ENCODE measurements at regions of chr2 and their contacts with region 1.

Region 1: DNA sequence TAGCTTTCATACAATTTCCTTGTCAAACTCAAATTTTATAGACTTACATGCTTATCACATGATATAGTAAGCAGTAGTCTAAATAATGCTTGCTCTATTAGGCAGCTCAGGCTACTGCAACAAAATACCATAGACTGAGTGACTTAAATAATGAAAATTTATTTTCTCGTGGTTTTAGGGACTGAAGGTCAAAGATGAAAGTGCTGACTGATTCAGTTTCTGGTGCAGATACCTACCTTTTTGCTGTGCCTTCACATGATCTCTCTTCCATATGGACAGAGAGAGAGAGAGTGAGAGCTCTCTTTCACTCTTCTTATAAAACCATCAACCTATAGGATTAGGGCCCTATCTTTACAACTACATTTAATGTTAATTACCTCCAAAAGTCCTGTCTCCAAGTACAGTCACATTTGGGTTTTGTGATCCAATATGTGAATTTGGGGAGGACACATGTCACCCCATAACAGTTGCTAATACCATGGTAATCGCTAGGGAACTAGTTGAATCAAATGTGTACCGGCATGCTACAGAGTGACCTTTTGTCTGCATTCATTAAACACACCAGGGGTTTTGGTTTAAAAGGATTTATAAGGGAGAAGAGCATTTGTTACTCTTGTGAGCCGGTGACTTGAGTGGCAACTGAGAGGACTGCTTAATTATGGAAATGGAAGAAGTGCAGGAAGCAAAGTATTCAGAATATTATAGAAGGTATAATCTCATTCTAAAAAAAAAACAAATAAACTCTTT is 723.4 kb upstream of the LRRTM4 start:
- DNase-seq: peak; percentile 13
- ATAC-seq: no peak
- H3K4me3 ChIP-seq: no peak overlapping the region
- H3K27ac ChIP-seq: peak overlapping the region; percentile 2
- H3K4me1 ChIP-seq: peaks cover 11% of the 10 kb centered on the region
- H3K27me3 ChIP-seq: no peaks in the 10 kb centered on the region
- CTCF ChIP-seq: no peak
- EP300 ChIP-seq: no peak
- POLR2A ChIP-seq: no peak
- RAD21 ChIP-seq: no peak

Region 2: DNA sequence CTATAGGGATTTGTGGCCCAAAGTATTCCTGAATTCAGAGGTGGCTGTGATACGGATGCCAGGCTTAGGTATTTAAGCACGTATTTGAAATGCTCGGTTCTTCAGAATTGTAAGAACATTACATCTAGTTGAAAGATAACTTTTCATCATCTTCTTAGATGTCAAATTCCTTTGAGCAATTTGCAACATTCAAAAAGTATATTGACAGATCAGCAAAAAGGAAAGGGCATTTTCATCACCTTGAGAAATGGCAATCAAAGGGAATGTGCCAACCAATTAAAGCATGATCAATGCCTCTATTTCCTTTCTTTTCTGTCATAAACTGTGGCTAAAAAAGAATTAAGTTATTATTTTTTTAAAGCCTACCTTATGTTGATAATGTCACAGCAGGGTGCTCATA is 657.1 kb before region 1 on chr2:
- CTCF ChIA-PET with region 1: no interaction called
- POLR2A ChIA-PET with region 1: no interaction called
- in situ Hi-C with region 1: no loop called
- intact Hi-C with region 1: loop called (anchors 5 kb)
- DNase-seq: no peak
- ATAC-seq: no peak
- H3K4me3 ChIP-seq: no peak overlapping the region
- H3K27ac ChIP-seq: no peak overlapping the region
- H3K4me1 ChIP-seq: no peaks in the 10 kb centered on the region
- H3K27me3 ChIP-seq: no peaks in the 10 kb centered on the region
- CTCF ChIP-seq: no peak
- EP300 ChIP-seq: no peak
- POLR2A ChIP-seq: no peak
- RAD21 ChIP-seq: no peak

Region 3: GRCh38 chr2:78147466-78147865 is 98.1 kb before region 1 on chr2:
- CTCF ChIA-PET with region 1: no interaction called
- POLR2A ChIA-PET with region 1: no interaction called
- in situ Hi-C with region 1: no loop called
- intact Hi-C with region 1: no loop called
- DNase-seq: no peak
- ATAC-seq: peak; percentile 29; the same call in 2 of the 3 replicates
- H3K4me3 ChIP-seq: no peak overlapping the region
- H3K27ac ChIP-seq: no peak overlapping the region
- H3K4me1 ChIP-seq: no peaks in the 10 kb centered on the region
- H3K27me3 ChIP-seq: no peaks in the 10 kb centered on the region
- CTCF ChIP-seq: no peak
- EP300 ChIP-seq: no peak
- POLR2A ChIP-seq: no peak
- RAD21 ChIP-seq: no peak

Region 4: DNA sequence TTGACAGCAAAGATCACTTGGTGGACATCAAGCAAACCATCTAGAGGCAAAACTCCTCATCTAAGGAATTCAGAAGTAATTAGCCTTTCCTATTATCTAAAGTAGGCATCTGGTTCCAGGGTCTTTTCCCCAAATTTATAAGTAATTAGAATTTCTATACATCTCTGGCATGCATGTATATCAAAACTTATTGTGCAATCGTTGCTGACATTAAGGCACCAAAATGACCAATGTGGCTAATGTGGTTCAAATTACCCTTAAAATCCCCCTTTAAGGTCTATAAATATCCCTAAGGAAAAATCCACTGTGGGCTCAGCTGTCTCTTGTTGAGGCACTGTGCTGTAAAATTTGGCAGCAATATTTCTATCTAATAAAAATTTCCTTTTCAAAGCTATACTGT is 27.5 kb before region 1 on chr2:
- CTCF ChIA-PET with region 1: no interaction called
- POLR2A ChIA-PET with region 1: no interaction called
- in situ Hi-C with region 1: no loop called
- intact Hi-C with region 1: no loop called
- DNase-seq: no peak
- ATAC-seq: no peak
- H3K4me3 ChIP-seq: no peak overlapping the region
- H3K27ac ChIP-seq: no peak overlapping the region
- H3K4me1 ChIP-seq: no peaks in the 10 kb centered on the region
- H3K27me3 ChIP-seq: no peaks in the 10 kb centered on the region
- CTCF ChIP-seq: no peak
- EP300 ChIP-seq: no peak
- POLR2A ChIP-seq: no peak
- RAD21 ChIP-seq: no peak

Region 5: DNA sequence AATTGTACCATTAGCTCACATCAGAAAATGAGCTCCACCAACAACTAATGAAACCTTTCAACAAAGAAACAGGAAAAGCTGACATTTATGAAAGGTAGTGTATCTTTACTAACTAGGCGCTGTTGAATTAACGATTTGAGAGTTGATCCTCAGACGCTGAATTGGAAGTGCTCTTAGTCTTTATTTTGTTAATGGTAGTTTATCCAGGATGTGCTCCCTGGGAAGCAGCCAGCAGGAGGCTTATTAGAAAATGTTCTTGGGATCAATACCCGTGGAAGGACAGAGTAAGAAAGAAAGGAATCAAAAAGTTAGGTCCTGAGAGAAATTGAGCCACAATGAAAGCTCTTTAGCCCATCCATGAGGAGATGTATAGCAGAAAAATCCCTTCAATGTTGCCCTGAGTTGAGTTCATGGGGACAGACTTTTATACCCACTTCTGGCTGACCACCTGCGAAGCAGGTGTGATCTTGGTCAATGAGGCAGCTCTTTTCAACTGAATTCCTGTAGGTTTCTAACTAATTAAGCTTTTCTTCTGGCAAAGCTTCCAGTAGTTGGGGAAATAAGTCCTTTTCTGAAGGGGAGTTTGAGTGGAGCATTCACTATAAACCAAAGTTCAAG is 287.3 kb after region 1 on chr2:
- CTCF ChIA-PET with region 1: no interaction called
- POLR2A ChIA-PET with region 1: no interaction called
- in situ Hi-C with region 1: loop called (anchors 5 kb)
- intact Hi-C with region 1: no loop called
- DNase-seq: no peak
- ATAC-seq: no peak
- H3K4me3 ChIP-seq: no peak overlapping the region
- H3K27ac ChIP-seq: no peak overlapping the region
- H3K4me1 ChIP-seq: peaks cover 50% of the 10 kb centered on the region
- H3K27me3 ChIP-seq: no peaks in the 10 kb centered on the region
- CTCF ChIP-seq: no peak
- EP300 ChIP-seq: no peak
- POLR2A ChIP-seq: no peak
- RAD21 ChIP-seq: no peak

Measured in HepG2 (cell line).